ENCODE measurements at regions of chr7 and their contacts with region 1.

Region 1: DNA sequence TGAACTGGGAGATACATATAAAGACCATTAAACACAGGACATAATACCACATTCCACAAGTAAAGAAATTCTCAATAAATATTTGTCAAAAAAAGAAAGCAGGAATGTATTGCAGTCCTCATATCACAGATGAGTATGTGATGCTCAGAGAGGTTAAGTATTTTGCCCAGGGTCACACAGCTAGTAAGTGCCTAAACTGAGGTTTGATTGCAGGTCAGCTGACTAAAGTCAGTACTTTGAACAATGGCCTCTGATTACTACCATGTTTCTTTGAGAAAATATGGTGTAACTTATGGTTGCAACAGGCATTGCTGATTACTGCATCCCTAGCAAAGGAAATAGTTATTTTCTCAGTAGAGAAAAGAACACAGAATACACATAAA is 267.1 kb downstream of the ELMO1 start:
- DNase-seq: no peak
- H3K4me3 ChIP-seq: no peak overlapping the region
- H3K27ac ChIP-seq: no peak overlapping the region
- H3K4me1 ChIP-seq: peaks cover 0 to 11% of the 10 kb centered on the region in 2 donors
- H3K27me3 ChIP-seq: no peaks in the 10 kb centered on the region
- CTCF ChIP-seq: no peak
- POLR2A ChIP-seq: no peak

Region 2: DNA sequence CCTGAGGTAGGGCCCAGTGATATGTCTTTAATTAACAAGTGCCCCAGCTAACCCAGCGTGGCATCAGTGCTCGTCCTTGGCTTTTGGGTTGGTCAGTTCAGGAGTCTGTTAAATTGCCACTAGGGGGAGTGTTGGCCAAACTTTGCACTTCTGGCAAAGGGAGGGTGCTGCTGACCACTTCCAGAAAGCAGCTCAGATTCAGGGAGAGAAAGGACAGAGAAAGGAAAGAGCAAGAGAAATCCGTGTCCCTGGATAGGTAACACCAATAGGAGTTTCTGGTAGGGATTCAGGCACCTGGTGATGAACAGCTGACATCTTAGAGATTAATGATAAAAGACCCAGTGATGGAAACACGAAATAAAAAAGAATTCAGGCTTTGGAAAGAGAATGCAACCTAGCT is 214.2 kb before region 1 on chr7:
- intact Hi-C with region 1: loop called in 1 of 2 experiments (anchors 5 kb)
- DNase-seq: peak; percentile 57 to 87 (median 74)
- H3K4me3 ChIP-seq: no peak overlapping the region
- H3K27ac ChIP-seq: peak overlapping the region in 1 of 5 donors; percentile 18
- H3K4me1 ChIP-seq: peaks cover 0 to 12% of the 10 kb centered on the region in 2 donors
- H3K27me3 ChIP-seq: no peaks in the 10 kb centered on the region
- CTCF ChIP-seq: peak; percentile 70 to 87 (median 80)
- POLR2A ChIP-seq: no peak

Region 3: GRCh38 chr7:36986429-36987362 is 194.8 kb before region 1 on chr7:
- intact Hi-C with region 1: loop called (anchors 5 to 10 kb)
- DNase-seq: peak; percentile 48 to 87 (median 61)
- H3K4me3 ChIP-seq: no peak overlapping the region
- H3K27ac ChIP-seq: no peak overlapping the region
- H3K4me1 ChIP-seq: no peaks in the 10 kb centered on the region
- H3K27me3 ChIP-seq: no peaks in the 10 kb centered on the region
- CTCF ChIP-seq: peak; percentile 74 to 88 (median 82)
- POLR2A ChIP-seq: no peak

Region 4: DNA sequence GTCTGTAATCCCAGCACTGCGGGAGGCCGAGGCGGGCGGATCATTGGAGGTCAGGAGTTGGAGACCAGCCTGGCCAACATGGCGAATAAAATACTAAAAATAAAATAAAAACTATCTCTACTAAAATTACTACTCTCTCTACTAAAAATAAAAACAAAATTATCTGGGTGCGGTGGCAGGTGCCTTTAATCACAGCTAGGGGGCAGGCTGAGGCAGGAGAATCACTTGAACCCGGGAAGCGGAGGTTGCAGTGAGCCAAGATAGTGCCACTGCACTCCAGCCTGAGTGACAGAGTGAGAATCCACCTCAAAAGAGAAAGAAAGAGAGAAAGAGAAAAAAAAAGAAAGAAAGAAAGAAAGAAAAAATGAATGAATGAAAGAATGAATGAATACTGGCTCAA is 84.3 kb before region 1 on chr7:
- intact Hi-C with region 1: loop called (anchors 5 to 10 kb)
- DNase-seq: peak in 1 of 7 donors; percentile 24
- H3K4me3 ChIP-seq: no peak overlapping the region
- H3K27ac ChIP-seq: no peak overlapping the region
- H3K4me1 ChIP-seq: peaks cover 0 to 6% of the 10 kb centered on the region in 2 donors
- H3K27me3 ChIP-seq: no peaks in the 10 kb centered on the region
- CTCF ChIP-seq: peak; percentile 37 to 89 (median 55)
- POLR2A ChIP-seq: no peak

Region 5: DNA sequence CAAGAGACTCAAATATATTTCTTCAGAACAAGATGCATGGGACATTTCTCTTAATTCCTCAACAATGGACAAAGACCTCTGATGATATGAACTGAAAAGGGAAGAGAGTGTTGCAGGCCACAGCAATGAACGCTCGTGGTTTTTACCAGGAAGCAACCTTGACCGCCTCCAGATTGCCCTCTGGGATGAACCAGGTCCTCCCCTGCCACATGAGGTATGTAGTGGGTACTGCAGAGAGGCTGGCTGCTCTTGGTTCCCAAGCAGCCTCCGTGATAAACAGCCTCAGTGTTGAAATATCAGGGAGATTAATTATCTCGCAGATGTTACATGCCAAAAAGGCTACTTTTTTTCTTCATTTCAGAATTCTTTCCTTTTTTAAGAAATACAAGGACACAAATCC is 71.7 kb before region 1 on chr7:
- intact Hi-C with region 1: loop called in 1 of 2 experiments (anchors 10 kb)
- DNase-seq: peak; percentile 45 to 90 (median 81)
- H3K4me3 ChIP-seq: no peak overlapping the region
- H3K27ac ChIP-seq: peak overlapping the region in 3 of 5 donors; percentile 12 to 44 (median 43)
- H3K4me1 ChIP-seq: peaks cover 19 to 40% of the 10 kb centered on the region in 2 donors
- H3K27me3 ChIP-seq: no peaks in the 10 kb centered on the region
- CTCF ChIP-seq: peak; percentile 24 to 59 (median 43)
- POLR2A ChIP-seq: no peak

Region 6: GRCh38 chr7:37440738-37441385 is 259.3 kb after region 1 on chr7:
- intact Hi-C with region 1: no loop called
- DNase-seq: no peak
- H3K4me3 ChIP-seq: no peak overlapping the region
- H3K27ac ChIP-seq: peak overlapping the region in 2 of 5 donors; percentile 40 to 59
- H3K4me1 ChIP-seq: peaks cover 0 to 23% of the 10 kb centered on the region in 2 donors
- H3K27me3 ChIP-seq: no peaks in the 10 kb centered on the region
- CTCF ChIP-seq: no peak
- POLR2A ChIP-seq: no peak

Measured in adrenal gland (tissue), 19 donors.